Mammary epithelial cell (primary cell): ENCODE measurements at regions of chr12 and their contacts with region 1.

Region 1: GRCh38 chr12:122526683-122527477 is at the starts of genes KNTC1 and RSRC2:
- DNase-seq: peak; percentile 100
- H3K4me3 ChIP-seq: peak within 1 kb of the TSS; percentile 76 to 94 (median 81)
- H3K27ac ChIP-seq: peak within 1 kb of the TSS; percentile 94
- H3K4me1 ChIP-seq: peaks cover 10% of the 10 kb centered on the region
- H3K27me3 ChIP-seq: no peaks in the 10 kb centered on the region
- CTCF ChIP-seq: no peak
- total RNA-seq, gene KNTC1: 12.7 to 32.9 TPM
- total RNA-seq, gene RSRC2: 26.3 to 88.5 TPM

Region 2: DNA sequence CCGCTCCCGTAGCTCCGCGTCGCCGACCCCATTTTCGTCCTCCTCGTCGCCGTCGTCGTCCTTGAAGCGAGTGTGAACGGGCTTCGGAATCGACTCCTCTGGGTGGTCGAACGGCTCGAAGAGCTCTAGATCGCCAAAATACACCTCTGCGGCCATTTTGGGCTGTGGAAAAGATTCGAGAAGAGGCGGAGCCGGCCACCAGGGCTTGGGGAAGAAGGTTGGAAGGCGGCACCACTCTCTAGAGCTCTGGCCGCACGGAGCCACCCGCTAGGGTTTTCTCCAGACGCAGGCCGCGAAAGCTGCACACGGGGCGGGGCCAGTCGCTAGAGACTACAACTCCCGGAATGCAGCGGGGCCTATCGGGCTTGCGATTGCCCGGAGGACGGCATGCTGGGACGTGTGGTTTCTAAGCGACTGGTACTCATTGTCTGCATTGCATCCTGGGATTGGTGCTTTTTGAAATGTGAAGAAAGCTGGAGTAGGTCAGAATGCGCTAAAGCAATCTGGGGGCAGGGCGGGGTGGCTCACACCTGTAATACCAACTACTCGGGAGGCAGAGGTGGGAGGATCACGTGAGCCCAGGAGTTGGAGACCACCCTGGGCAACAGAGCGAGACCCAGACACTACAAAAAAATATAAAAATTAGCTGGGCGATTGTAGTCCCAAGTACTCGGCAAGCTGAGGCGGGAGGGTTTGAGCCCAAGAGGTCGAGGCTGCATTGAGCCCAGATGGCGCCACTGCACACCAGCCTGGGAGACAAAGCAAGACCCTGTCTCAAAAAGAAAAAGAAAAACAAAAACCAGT is 26.0 kb before region 1 on chr12 and contains the start of gene ZCCHC8:
- CTCF ChIA-PET with region 1: no interaction called
- dilution Hi-C with region 1: no loop called
- in situ Hi-C with region 1: no loop called
- intact Hi-C with region 1: loop called (anchors 2 kb)
- DNase-seq: peak; percentile 98
- H3K4me3 ChIP-seq: peak within 1 kb of the TSS; percentile 80 to 100 (median 95)
- H3K27ac ChIP-seq: peak within 1 kb of the TSS; percentile 93
- H3K4me1 ChIP-seq: no peaks in the 10 kb centered on the region
- H3K27me3 ChIP-seq: no peaks in the 10 kb centered on the region
- CTCF ChIP-seq: peak in 1 of 2 donors; percentile 20
- total RNA-seq, gene ZCCHC8: 17.0 to 30.9 TPM

Region 3: GRCh38 chr12:122752464-122753318 is 225.8 kb after region 1 on chr12 and contains the start of gene DENR:
- CTCF ChIA-PET with region 1: interaction called, 4 read pairs
- dilution Hi-C with region 1: no loop called
- in situ Hi-C with region 1: no loop called
- intact Hi-C with region 1: loop called (anchors 1 kb)
- DNase-seq: peak; percentile 99
- H3K4me3 ChIP-seq: peak within 1 kb of the TSS; percentile 70 to 80 (median 78)
- H3K27ac ChIP-seq: peak within 1 kb of the TSS; percentile 66
- H3K4me1 ChIP-seq: peaks cover 14% of the 10 kb centered on the region
- H3K27me3 ChIP-seq: no peaks in the 10 kb centered on the region
- CTCF ChIP-seq: peak; percentile 88 to 92
- total RNA-seq, gene DENR: 42.5 to 73.0 TPM